Mammary epithelial cell (primary cell): ENCODE measurements at regions of chr1 and their contacts with region 1.

Region 1: DNA sequence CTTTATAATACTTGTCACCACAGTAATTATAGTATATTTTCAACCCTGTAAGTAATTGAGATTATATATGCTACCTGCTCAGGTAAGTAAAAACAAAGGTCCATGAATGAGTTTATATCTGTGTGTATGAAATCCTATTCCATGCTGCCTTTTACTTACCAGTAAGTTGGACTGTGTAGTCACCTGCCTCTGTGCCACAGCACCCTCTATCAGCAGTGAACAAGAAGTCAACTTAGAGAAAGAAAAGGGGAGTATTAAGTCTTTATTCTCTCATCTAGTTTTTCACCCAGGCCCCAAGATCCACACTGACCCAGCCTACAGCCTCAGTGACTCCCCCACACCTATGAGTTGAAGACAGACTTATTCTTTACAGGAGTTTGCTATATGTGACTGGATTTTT is 36.9 kb upstream of the IFI16 start:
- DNase-seq: peak; percentile 21
- H3K4me3 ChIP-seq: no peak overlapping the region
- H3K27ac ChIP-seq: no peak overlapping the region
- H3K4me1 ChIP-seq: peaks cover 12% of the 10 kb centered on the region
- H3K27me3 ChIP-seq: no peaks in the 10 kb centered on the region
- CTCF ChIP-seq: peak; percentile 39 to 69

Region 2: DNA sequence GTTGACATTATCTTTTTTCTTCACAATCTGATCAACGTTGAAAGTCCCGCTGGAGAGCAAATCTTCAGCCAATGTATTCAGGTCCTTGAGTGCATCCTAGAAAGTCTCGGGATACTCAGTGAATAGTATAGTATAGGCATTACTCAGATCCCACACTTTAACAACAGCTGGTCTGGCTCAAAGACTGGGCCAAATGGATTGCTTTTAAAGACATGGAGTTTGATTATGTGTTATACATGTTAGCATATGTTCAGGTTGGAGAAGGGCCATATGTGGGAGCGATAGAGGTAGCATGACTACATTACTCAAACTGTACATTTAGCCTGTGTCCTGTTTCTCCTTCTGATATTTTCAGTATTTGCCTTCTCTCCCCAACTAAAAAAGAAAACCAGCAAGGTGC is 334.7 kb before region 1 on chr1:
- CTCF ChIA-PET with region 1: no interaction called
- dilution Hi-C with region 1: no loop called
- in situ Hi-C with region 1: no loop called
- intact Hi-C with region 1: loop called (anchors 10 kb)
- DNase-seq: no peak
- H3K4me3 ChIP-seq: no peak overlapping the region
- H3K27ac ChIP-seq: no peak overlapping the region
- H3K4me1 ChIP-seq: no peaks in the 10 kb centered on the region
- H3K27me3 ChIP-seq: no peaks in the 10 kb centered on the region
- CTCF ChIP-seq: no peak